PC-3 (cell line): ENCODE measurements at regions of chr3 and their contacts with region 1.

Region 1: DNA sequence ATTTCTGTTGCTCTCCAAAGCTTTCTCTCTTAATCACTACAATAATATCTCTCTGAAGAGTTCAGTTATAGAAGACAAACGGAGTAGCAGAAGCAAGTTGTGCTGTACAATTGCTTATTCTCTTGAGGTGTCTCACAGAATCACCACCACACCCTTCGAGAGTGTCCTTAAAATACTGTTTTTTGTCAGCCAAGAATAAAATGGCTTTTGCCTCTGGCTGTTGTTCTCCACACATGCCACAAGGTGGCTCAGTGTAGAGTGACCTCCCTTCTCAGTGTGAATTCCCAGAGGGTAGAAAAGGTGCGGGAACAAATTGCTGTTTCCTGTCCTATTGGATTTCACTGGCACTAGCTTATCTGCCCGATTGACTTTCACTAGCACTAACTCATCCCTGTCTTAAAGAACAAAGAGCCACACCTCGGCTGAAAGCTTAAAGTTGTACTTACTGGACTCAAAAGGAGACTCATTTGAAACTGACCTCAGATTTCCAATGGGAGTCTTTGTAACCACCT is 134.2 kb upstream of the SATB1 start:
- DNase-seq: peak; percentile 82
- ATAC-seq: peak; percentile 47
- H3K4me3 ChIP-seq: no peak overlapping the region
- H3K27ac ChIP-seq: peak overlapping the region; percentile 21
- H3K4me1 ChIP-seq: peaks cover 53% of the 10 kb centered on the region
- H3K27me3 ChIP-seq: no peaks in the 10 kb centered on the region
- CTCF ChIP-seq: peak; percentile 89

Region 2: DNA sequence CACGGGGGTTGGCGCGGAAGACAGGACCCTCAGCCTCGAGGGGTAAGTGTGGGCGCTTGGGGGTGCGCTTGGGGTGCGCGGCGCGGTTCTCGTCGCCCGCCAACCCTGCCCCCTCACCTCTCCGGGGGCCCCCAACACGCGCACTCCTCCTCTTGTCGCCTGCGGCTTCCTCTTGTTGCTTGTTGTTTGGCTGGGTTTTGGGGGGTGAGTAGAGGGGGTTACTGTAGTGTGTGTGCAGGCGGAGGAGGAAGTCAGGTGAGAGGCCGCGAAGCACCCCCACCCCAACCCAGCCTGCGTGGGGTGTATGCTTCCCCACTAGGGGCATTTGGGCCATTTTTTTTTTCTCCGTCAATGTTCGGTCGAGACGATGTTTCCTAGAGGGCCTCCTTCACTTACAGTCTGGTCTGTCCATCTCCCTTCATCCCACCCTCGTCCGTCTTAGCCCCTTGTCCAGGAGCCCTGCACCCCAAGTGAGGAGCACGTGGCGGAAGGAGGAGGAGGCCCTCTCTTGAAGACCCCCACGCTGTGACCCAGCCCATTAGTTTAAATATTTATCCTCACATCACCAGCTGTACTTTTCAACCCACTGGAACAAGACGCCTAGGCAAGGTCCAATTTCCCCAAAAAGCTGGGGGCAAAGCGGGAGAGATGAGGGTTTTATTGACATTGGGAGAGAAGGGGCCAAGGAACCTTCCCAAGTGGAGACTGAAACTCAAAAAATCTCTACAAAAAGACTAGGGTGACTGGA is 113.8 kb before region 1 on chr3:
- CTCF ChIA-PET with region 1: no interaction called
- POLR2A ChIA-PET with region 1: interaction called, 3 read pairs
- intact Hi-C with region 1: loop called (anchors 1 kb)
- DNase-seq: no peak
- ATAC-seq: peak; percentile 9
- H3K4me3 ChIP-seq: peak overlapping the region; percentile 74
- H3K27ac ChIP-seq: no peak overlapping the region
- H3K4me1 ChIP-seq: peaks cover 22% of the 10 kb centered on the region
- H3K27me3 ChIP-seq: peaks cover 28% of the 10 kb centered on the region
- CTCF ChIP-seq: no peak